ENCODE measurements at regions of chr4 and their contacts with region 1.

Region 1: DNA sequence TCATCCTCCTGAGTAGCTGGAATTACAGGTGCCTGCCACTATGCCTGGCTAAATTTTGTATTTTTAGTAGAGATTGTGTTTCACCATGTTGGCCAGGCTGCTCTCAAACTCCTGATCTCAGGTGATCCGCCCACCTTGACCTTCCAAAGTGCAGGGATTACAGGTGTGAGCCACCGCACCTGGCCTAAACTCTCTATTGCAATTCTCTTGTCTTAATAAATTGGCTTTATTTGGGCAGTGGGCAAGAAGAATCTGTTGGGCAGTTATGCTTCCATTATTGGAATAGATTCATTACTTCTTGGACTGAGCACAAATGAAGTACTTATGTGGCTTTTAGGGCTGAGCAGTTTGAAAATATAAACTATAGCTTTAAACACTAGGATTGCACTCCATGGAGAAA is 8.2 kb upstream of the GPAT3 start:
- DNase-seq: no peak
- ATAC-seq: no peak
- H3K4me3 ChIP-seq: no peak overlapping the region
- H3K27ac ChIP-seq: no peak overlapping the region
- H3K4me1 ChIP-seq: no peaks in the 10 kb centered on the region
- H3K27me3 ChIP-seq: no peaks in the 10 kb centered on the region
- CTCF ChIP-seq: no peak
- POLR2A ChIP-seq: no peak
- RAD21 ChIP-seq: no peak

Region 2: GRCh38 chr4:83490876-83491450 is 36.7 kb before region 1 on chr4:
- CTCF ChIA-PET with region 1: no interaction called
- POLR2A ChIA-PET with region 1: no interaction called
- RAD21 ChIA-PET with region 1: no interaction called
- intact Hi-C with region 1: loop called (anchors 2 kb)
- DNase-seq: peak; percentile 42
- ATAC-seq: peak; percentile 77
- H3K4me3 ChIP-seq: no peak overlapping the region
- H3K27ac ChIP-seq: no peak overlapping the region
- H3K4me1 ChIP-seq: no peaks in the 10 kb centered on the region
- H3K27me3 ChIP-seq: no peaks in the 10 kb centered on the region
- CTCF ChIP-seq: peak; percentile 73 to 96 (median 90); a peak in 5 of 6 replicates
- POLR2A ChIP-seq: no peak
- RAD21 ChIP-seq: peak; percentile 75

Region 3: GRCh38 chr4:83548151-83548905 is 20.7 kb after region 1 on chr4:
- CTCF ChIA-PET with region 1: no interaction called
- POLR2A ChIA-PET with region 1: no interaction called
- RAD21 ChIA-PET with region 1: no interaction called
- intact Hi-C with region 1: no loop called
- DNase-seq: peak; percentile 99
- ATAC-seq: peak; percentile 85
- H3K4me3 ChIP-seq: peak overlapping the region in 1 of 2 experiments; percentile 38; a peak in 2 of 4 replicates
- H3K27ac ChIP-seq: peak overlapping the region; percentile 73
- H3K4me1 ChIP-seq: peaks cover 40 to 64% of the 10 kb centered on the region in 2 experiments
- H3K27me3 ChIP-seq: no peaks in the 10 kb centered on the region
- CTCF ChIP-seq: no peak
- POLR2A ChIP-seq: no peak
- RAD21 ChIP-seq: no peak; the same call in 1 of the 2 replicates

Region 4: GRCh38 chr4:83716874-83717273 is 189.2 kb after region 1 on chr4:
- CTCF ChIA-PET with region 1: no interaction called
- POLR2A ChIA-PET with region 1: no interaction called
- RAD21 ChIA-PET with region 1: no interaction called
- intact Hi-C with region 1: no loop called
- DNase-seq: no peak
- ATAC-seq: no peak
- H3K4me3 ChIP-seq: no peak overlapping the region
- H3K27ac ChIP-seq: no peak overlapping the region
- H3K4me1 ChIP-seq: no peaks in the 10 kb centered on the region
- H3K27me3 ChIP-seq: no peaks in the 10 kb centered on the region
- CTCF ChIP-seq: no peak
- POLR2A ChIP-seq: no peak
- RAD21 ChIP-seq: no peak

Measured in HCT116 (cell line).